Mammary epithelial cell (primary cell): ENCODE measurements at regions of chr18 and their contacts with region 1.

Region 1: GRCh38 chr18:2826581-2826980 is 20.2 kb upstream of the EMILIN2 start:
- DNase-seq: no peak
- H3K4me3 ChIP-seq: no peak overlapping the region
- H3K27ac ChIP-seq: no peak overlapping the region
- H3K4me1 ChIP-seq: no peaks in the 10 kb centered on the region
- H3K27me3 ChIP-seq: no peaks in the 10 kb centered on the region
- CTCF ChIP-seq: no peak

Region 2: GRCh38 chr18:2746274-2746673 is 80.3 kb before region 1 on chr18:
- CTCF ChIA-PET with region 1: no interaction called
- dilution Hi-C with region 1: loop called (anchors 5 kb)
- in situ Hi-C with region 1: no loop called
- intact Hi-C with region 1: no loop called
- DNase-seq: no peak
- H3K4me3 ChIP-seq: no peak overlapping the region
- H3K27ac ChIP-seq: no peak overlapping the region
- H3K4me1 ChIP-seq: peaks cover 4% of the 10 kb centered on the region
- H3K27me3 ChIP-seq: no peaks in the 10 kb centered on the region
- CTCF ChIP-seq: no peak

Region 3: GRCh38 chr18:2776601-2777000 is 50.0 kb before region 1 on chr18:
- CTCF ChIA-PET with region 1: no interaction called
- dilution Hi-C with region 1: no loop called
- in situ Hi-C with region 1: no loop called
- intact Hi-C with region 1: no loop called
- DNase-seq: no peak
- H3K4me3 ChIP-seq: no peak overlapping the region
- H3K27ac ChIP-seq: no peak overlapping the region
- H3K4me1 ChIP-seq: no peaks in the 10 kb centered on the region
- H3K27me3 ChIP-seq: no peaks in the 10 kb centered on the region
- CTCF ChIP-seq: no peak

Region 4: DNA sequence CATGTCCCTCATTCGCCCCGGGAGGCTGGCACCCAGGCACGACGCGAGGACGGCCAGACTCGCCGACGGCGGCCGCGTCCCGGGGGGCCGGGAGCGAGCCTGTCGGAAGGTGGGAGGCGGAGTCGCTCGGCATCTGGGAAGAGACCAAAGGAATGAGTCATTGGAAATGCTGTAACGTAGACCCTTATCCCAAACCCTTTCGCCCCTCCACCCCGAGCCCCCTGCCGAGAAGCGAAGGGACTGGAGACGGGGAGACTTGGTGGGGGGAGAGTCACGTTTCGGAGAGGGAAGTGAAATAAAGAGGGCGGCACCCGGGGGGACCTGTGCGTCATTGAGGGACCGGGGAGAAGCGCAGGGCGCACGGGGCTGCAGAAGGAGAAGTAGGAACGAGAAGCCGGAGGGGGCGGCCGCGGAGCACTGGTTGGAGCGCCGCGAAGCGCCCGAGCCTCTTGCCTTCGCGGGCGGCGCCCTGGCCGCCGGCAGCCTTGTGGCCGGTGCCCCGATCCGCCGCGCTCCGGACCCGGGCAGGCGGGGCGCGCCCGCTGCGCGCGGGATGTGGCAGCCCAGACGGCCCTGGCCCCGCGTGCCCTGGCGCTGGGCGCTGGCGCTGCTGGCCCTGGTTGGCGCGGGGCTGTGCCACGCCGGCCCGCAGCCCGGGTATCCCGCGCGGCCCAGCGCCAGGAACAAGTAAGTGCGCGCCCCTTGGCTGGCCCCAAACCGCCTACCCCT is 20.2 kb after region 1 on chr18 and contains the start of gene EMILIN2:
- CTCF ChIA-PET with region 1: no interaction called
- dilution Hi-C with region 1: no loop called
- in situ Hi-C with region 1: no loop called
- intact Hi-C with region 1: no loop called
- DNase-seq: no peak
- H3K4me3 ChIP-seq: peak within 1 kb of the TSS; percentile 3 to 28 (median 27)
- H3K27ac ChIP-seq: no peak within 1 kb of the TSS
- H3K4me1 ChIP-seq: peaks cover 14% of the 10 kb centered on the region
- H3K27me3 ChIP-seq: peaks cover 31% of the 10 kb centered on the region
- CTCF ChIP-seq: no peak
- total RNA-seq, gene EMILIN2: 0.52 to 1.3 TPM